ENCODE measurements at regions of chr15 and their contacts with region 1.

Region 1: DNA sequence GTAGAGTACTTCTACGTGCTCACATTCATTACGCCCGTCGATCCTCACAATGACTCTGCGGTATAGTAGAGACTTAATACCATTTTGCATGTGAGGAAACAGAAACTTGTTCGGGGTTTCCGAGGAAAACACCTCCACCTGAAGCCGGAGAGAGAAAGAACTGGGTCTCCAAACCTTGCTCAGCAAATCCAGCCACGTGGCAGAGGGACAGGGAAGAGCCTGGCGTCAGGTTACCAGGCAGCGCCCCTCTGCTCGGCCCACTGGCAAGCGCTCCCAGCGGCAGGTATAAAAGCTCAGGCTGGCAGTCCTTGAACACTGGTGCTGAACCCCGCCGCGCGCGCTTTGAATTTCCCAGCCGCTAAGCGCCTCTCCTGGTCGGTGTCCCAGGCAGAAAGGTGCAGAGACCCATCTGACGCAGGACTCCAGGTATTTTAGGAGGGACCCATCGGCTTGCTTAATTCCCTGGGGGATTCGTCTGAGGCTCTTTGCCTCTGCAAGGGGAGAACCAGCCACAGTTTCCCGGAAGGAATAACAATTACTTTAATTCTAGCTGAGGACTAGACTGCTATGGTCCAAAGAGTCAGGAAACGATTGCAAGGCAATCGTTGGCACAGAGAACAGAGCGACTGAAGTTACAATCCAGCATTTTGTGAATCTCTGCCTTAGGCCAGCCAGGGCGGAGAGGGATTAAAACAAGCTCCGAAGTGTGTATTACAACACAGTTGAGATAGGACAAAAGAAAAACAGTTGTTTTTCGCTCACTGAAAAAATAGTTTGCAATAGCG is at the start of gene C2CD4A:
- DNase-seq: peak; percentile 19 to 74 (median 60)
- ATAC-seq: peak; percentile 74
- H3K4me3 ChIP-seq: peak within 1 kb of the TSS; percentile 50 to 51
- H3K4me3 Mint-ChIP-seq: peak within 1 kb of the TSS; percentile 88
- H3K27ac ChIP-seq: no peak within 1 kb of the TSS
- H3K27ac Mint-ChIP-seq: no peak within 1 kb of the TSS
- H3K4me1 ChIP-seq: peaks cover 14% of the 10 kb centered on the region
- H3K4me1 Mint-ChIP-seq: peaks cover 25% of the 10 kb centered on the region
- H3K27me3 ChIP-seq: peaks cover 5 to 8% of the 10 kb centered on the region in 2 experiments
- H3K27me3 Mint-ChIP-seq: peaks cover 22% of the 10 kb centered on the region
- CTCF ChIP-seq: no peak
- total RNA-seq, gene C2CD4A: 0.08 to 0.11 TPM

Region 2: DNA sequence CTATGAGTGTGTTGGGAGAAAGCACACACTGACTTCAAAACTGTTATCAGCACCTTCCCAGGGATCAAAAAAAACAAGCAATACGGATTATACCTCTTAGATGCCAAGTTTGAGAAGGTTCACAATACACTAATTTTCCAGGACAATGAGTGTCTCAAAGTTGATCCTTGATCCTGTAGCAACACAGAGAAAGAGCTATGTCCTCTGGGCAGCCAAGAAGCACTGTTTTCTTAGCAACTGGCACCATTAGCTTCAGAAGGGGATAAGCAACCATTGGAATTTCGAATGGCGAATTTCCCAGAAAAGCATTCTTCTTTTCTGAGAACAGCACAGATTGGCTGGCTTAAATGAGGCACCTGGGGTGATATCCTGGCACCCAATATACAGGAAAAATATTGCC is 567.5 kb before region 1 on chr15:
- CTCF ChIA-PET with region 1: no interaction called
- POLR2A ChIA-PET with region 1: no interaction called
- intact Hi-C with region 1: no loop called
- DNase-seq: no peak
- ATAC-seq: no peak
- H3K4me3 ChIP-seq: no peak overlapping the region
- H3K4me3 Mint-ChIP-seq: no peak overlapping the region
- H3K27ac ChIP-seq: no peak overlapping the region
- H3K27ac Mint-ChIP-seq: no peak overlapping the region
- H3K4me1 ChIP-seq: no peaks in the 10 kb centered on the region
- H3K4me1 Mint-ChIP-seq: no peaks in the 10 kb centered on the region
- H3K27me3 ChIP-seq: no peaks in the 10 kb centered on the region
- H3K27me3 Mint-ChIP-seq: peaks cover 20% of the 10 kb centered on the region
- CTCF ChIP-seq: no peak

Region 3: DNA sequence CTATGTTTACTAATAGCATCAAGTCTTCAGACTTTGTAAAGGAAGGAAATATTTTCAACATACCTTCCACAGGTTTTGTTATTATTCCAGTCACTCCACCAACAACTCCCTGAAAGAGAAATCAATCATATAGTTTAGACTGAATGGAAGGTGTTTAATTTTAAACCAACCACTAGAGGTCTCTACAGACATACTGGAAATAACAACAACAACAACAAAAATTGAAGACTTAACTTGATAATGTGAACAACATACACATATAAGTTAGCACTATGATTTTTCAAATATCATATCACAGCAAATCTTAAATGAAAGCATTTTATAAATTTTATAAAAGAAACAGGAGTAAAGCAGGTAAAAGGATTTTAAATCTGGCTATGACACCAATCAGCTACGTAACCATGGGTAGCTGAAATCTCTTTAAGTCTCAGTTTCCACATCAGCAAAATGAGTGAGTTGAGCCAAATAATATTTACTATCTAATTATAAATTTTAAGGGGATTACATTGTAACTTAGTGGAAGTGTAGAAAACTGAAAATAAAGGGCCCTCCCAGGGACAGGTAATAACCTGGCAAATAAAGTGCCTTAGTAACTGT is 194.8 kb before region 1 on chr15:
- CTCF ChIA-PET with region 1: interaction called, 3 read pairs
- POLR2A ChIA-PET with region 1: no interaction called
- intact Hi-C with region 1: loop called (anchors 1 kb)
- DNase-seq: peak in 2 of 9 experiments; percentile 7 to 27
- ATAC-seq: no peak
- H3K4me3 ChIP-seq: no peak overlapping the region
- H3K4me3 Mint-ChIP-seq: no peak overlapping the region
- H3K27ac ChIP-seq: no peak overlapping the region
- H3K27ac Mint-ChIP-seq: no peak overlapping the region
- H3K4me1 ChIP-seq: no peaks in the 10 kb centered on the region
- H3K4me1 Mint-ChIP-seq: no peaks in the 10 kb centered on the region
- H3K27me3 ChIP-seq: no peaks in the 10 kb centered on the region
- H3K27me3 Mint-ChIP-seq: no peaks in the 10 kb centered on the region
- CTCF ChIP-seq: peak; percentile 66

Region 4: DNA sequence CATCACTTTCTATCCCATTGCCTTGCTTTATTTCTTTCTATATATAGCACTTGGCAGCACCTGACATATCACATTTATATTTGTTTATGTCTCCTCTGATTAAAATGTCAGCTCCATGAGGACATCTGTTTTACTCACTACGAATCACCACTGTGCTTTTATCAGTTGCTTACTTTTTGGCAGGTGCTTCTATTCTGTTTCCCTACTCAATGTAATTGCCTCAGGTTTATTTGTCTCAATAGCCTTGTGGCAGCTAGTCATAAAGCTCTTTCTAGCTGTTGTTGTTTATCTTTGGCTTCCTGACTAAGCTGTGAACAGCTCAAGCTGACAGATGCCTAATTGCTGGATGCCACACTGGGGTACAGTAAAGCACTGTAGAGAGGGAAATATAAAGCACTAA is 92.1 kb before region 1 on chr15:
- CTCF ChIA-PET with region 1: interaction called, 5 read pairs
- POLR2A ChIA-PET with region 1: no interaction called
- intact Hi-C with region 1: loop called (anchors 5 kb)
- DNase-seq: no peak
- ATAC-seq: no peak
- H3K4me3 ChIP-seq: no peak overlapping the region
- H3K4me3 Mint-ChIP-seq: no peak overlapping the region
- H3K27ac ChIP-seq: no peak overlapping the region
- H3K27ac Mint-ChIP-seq: peak overlapping the region; percentile 7
- H3K4me1 ChIP-seq: no peaks in the 10 kb centered on the region
- H3K4me1 Mint-ChIP-seq: peaks cover 14% of the 10 kb centered on the region
- H3K27me3 ChIP-seq: no peaks in the 10 kb centered on the region
- H3K27me3 Mint-ChIP-seq: no peaks in the 10 kb centered on the region
- CTCF ChIP-seq: no peak

Region 5: GRCh38 chr15:62021991-62022600 is 44.8 kb before region 1 on chr15:
- CTCF ChIA-PET with region 1: interaction called, 9 read pairs
- POLR2A ChIA-PET with region 1: no interaction called
- intact Hi-C with region 1: loop called in 1 of 2 experiments (anchors 1 kb)
- DNase-seq: peak in 1 of 9 experiments; percentile 2
- ATAC-seq: no peak
- H3K4me3 ChIP-seq: no peak overlapping the region
- H3K4me3 Mint-ChIP-seq: no peak overlapping the region
- H3K27ac ChIP-seq: no peak overlapping the region
- H3K27ac Mint-ChIP-seq: no peak overlapping the region
- H3K4me1 ChIP-seq: no peaks in the 10 kb centered on the region
- H3K4me1 Mint-ChIP-seq: peaks cover 5% of the 10 kb centered on the region
- H3K27me3 ChIP-seq: no peaks in the 10 kb centered on the region
- H3K27me3 Mint-ChIP-seq: no peaks in the 10 kb centered on the region
- CTCF ChIP-seq: no peak

Region 6: DNA sequence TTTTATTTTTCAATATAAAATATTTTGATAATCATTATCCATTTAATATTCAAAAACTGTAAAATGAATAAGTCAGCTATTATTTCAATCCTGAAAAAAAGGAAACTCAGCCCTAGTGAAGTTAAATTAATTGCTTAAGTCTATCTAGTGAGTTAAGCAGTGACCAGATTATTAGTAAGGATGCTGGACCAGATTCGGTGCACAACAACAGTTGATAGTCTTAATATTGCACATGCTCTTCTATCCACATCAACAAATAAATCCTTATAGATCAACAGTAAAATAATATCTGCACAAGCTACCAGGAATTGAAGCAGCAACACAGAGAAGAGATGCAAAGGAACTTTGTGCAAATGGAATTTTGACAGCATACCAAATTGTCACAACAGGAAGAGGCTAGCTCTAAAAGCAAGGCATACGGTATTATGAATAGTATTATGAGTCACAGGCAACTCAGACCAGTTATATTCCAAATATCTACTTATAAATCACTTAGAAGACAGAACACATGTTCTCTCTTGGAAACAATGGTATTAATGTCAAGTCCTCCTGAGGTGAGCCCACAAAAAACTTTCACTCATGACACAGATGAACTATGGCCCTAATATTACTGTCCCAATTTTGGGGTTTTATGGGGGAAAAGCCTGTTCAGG is 31.5 kb before region 1 on chr15:
- CTCF ChIA-PET with region 1: no interaction called
- POLR2A ChIA-PET with region 1: no interaction called
- intact Hi-C with region 1: loop called in 1 of 2 experiments (anchors 5 kb)
- DNase-seq: no peak
- ATAC-seq: no peak
- H3K4me3 ChIP-seq: no peak overlapping the region
- H3K4me3 Mint-ChIP-seq: no peak overlapping the region
- H3K27ac ChIP-seq: no peak overlapping the region
- H3K27ac Mint-ChIP-seq: no peak overlapping the region
- H3K4me1 ChIP-seq: no peaks in the 10 kb centered on the region
- H3K4me1 Mint-ChIP-seq: peaks cover 26% of the 10 kb centered on the region
- H3K27me3 ChIP-seq: no peaks in the 10 kb centered on the region
- H3K27me3 Mint-ChIP-seq: no peaks in the 10 kb centered on the region
- CTCF ChIP-seq: no peak

Measured in CD8-positive, alpha-beta T cell (primary cell).